GM23248 (cell line): ENCODE measurements at regions of chr2 and their contacts with region 1.

Region 1: GRCh38 chr2:230809677-230810251 is 55.0 kb upstream of the ITM2C start:
- DNase-seq: no peak
- H3K4me3 ChIP-seq: no peak overlapping the region
- H3K27ac ChIP-seq: no peak overlapping the region
- H3K4me1 ChIP-seq: no peaks in the 10 kb centered on the region
- H3K27me3 ChIP-seq: no peaks in the 10 kb centered on the region

Region 2: DNA sequence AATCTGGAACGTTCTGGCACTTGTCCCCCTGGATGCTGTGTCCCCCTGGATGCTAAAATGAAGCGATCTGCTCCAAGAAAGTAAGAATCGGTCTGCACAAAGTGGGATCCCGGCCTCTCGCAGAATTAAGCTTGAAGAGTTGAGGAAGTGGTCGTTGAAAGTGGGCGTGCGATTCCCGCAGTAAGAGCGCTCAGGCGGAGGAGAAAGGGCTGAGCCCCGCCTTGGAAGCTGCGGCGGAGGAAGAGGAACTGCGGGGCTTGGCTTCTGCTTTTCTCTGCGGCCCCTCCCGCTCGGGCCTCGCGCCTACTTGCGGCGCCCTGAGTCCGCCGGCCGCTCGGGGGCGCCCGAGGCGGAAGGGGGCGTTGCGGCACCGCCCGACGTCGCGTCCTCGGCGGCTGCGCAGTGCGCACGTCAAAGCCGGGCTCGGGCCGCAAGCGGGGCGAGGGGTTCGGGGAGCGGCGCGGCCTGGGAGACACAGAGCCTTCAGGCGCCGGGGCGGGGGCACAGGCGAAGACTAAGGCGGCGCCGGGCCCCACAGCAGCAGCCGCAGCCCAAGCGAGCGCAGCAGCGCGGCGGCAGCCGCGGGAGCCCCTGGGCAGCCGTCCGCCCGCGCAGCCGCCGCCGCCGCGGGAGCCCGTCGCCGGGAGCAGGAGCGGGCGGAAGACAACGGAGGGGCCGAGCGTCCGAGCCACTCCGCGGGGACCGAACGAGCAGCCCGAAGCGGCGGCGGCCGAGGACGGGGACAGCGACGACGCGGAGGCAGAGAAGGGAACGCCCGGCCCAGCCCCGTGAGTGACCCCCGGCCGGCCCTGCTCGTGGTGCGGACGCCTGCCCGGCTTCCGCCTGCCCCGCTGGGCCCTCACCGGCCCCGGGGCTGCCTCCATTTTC is 97.1 kb before region 1 on chr2 and contains the start of gene CAB39:
- in situ Hi-C with region 1: loop called (anchors 10 kb)
- DNase-seq: peak; percentile 96
- H3K4me3 ChIP-seq: peak within 1 kb of the TSS; percentile 93
- H3K27ac ChIP-seq: peak within 1 kb of the TSS; percentile 86
- H3K4me1 ChIP-seq: peaks cover 19% of the 10 kb centered on the region
- H3K27me3 ChIP-seq: no peaks in the 10 kb centered on the region
- total RNA-seq, gene CAB39: 49.1 and 52.1 TPM in 2 replicates

Region 3: GRCh38 chr2:230974096-230974913 is 164.5 kb after region 1 on chr2:
- in situ Hi-C with region 1: no loop called
- DNase-seq: peak; percentile 50
- H3K4me3 ChIP-seq: no peak overlapping the region
- H3K27ac ChIP-seq: no peak overlapping the region
- H3K4me1 ChIP-seq: no peaks in the 10 kb centered on the region; the same call in 1 of the 2 replicates
- H3K27me3 ChIP-seq: peaks cover 12% of the 10 kb centered on the region; the same call in 1 of the 2 replicates